ENCODE measurements at regions of chr1 and their contacts with region 1.

Region 1: DNA sequence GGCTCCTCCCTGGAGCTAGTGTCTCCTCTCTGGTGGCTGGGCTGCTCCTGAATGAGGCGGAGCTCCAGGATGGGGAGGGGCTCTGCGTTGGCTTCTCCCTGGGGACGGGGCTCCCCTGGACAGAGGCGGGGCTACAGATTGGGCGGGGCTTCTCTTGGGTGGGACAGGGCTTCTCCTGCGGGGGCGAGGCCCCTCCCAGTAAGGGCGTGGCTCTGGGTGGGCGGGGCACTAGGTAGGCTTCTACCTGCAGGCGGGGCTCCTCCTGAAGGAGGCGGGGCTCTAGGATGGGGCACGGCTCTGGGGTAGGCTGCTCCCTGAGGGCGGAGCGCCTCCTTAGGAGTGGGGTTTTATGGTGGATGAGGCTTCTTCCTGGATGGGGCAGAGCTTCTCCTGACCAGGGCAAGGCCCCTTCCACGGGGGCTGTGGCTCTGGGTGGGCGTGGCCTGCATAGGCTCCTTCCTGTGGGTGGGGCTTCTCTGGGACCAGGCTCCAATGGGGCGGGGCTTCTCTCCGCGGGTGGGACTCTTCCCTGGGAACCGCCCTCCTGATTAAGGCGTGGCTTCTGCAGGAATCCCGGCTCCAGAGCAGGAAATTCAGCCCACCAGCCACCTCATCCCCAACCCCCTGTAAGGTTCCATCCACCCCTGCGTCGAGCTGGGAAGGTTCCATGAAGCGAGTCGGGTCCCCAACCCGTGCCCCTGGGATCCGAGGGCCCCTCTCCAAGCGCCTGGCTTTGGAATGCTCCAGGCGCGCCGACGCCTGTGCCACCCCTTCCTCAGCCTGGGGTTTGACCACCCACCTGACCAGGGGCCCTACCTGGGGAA is 22.7 kb upstream of the ARF1 start:
- DNase-seq: peak; percentile 91
- ATAC-seq: peak; percentile 85
- H3K4me3 Mint-ChIP-seq: peak overlapping the region; percentile 51
- H3K27ac Mint-ChIP-seq: no peak overlapping the region
- H3K4me1 Mint-ChIP-seq: peaks cover 9% of the 10 kb centered on the region
- H3K27me3 Mint-ChIP-seq: peaks cover 30% of the 10 kb centered on the region

Region 2: GRCh38 chr1:228102791-228103620 is 43.2 kb after region 1 on chr1 and contains the start of gene C1orf35:
- CTCF ChIA-PET with region 1: no interaction called
- POLR2A ChIA-PET with region 1: no interaction called
- intact Hi-C with region 1: loop called in 1 of 2 experiments (anchors 1 kb)
- DNase-seq: peak; percentile 97
- ATAC-seq: peak; percentile 90
- H3K4me3 Mint-ChIP-seq: peak within 1 kb of the TSS; percentile 89
- H3K27ac Mint-ChIP-seq: peak within 1 kb of the TSS; percentile 91
- H3K4me1 Mint-ChIP-seq: peaks cover 22% of the 10 kb centered on the region
- H3K27me3 Mint-ChIP-seq: no peaks in the 10 kb centered on the region
- total RNA-seq, gene C1orf35: 14.6 to 22.5 TPM

Region 3: GRCh38 chr1:228174482-228175375 is 114.9 kb after region 1 on chr1:
- CTCF ChIA-PET with region 1: no interaction called
- POLR2A ChIA-PET with region 1: no interaction called
- intact Hi-C with region 1: loop called in 1 of 2 experiments (anchors 2 kb)
- DNase-seq: peak; percentile 59
- ATAC-seq: peak; percentile 67
- H3K4me3 Mint-ChIP-seq: no peak overlapping the region
- H3K27ac Mint-ChIP-seq: no peak overlapping the region
- H3K4me1 Mint-ChIP-seq: no peaks in the 10 kb centered on the region
- H3K27me3 Mint-ChIP-seq: no peaks in the 10 kb centered on the region

Region 4: DNA sequence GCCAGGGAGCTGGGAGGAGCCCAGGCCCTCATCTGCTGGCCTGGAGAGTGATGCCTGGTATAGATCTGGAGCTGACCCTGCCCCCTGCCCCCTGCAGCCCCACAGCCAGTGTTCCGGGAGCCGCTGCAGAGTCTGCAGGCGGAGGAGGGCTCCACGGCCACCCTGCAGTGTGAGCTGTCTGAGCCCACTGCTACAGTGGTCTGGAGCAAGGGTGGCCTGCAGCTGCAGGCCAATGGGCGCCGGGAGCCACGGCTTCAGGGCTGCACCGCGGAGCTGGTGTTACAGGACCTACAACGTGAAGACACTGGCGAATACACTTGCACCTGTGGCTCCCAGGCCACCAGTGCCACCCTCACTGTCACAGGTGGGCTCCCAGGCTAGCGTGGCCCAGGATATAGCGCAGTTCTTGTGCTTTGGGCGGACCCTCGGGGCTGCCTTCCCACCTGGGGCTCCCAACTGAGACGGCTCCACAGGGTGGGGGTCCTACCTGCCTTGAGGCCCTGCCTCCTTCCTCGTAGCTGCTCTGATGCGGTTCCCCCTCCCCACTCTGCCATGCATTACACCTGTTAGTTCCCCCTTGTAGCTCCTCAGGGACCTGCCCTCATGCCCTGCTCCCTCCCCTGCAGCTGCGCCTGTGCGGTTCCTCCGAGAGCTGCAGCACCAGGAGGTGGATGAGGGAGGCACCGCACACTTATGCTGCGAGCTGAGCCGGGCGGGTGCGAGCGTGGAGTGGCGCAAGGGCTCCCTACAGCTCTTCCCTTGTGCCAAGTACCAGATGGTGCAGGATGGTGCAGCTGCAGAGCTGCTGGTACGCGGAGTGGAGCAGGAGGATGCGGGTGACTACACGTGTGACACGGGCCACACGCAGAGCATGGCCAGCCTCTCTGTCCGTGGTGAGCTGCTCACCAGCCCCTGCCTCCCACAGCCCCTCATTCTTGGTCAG is 246.7 kb after region 1 on chr1:
- CTCF ChIA-PET with region 1: no interaction called
- POLR2A ChIA-PET with region 1: no interaction called
- intact Hi-C with region 1: no loop called
- DNase-seq: no peak
- ATAC-seq: no peak
- H3K4me3 Mint-ChIP-seq: no peak overlapping the region
- H3K27ac Mint-ChIP-seq: no peak overlapping the region
- H3K4me1 Mint-ChIP-seq: no peaks in the 10 kb centered on the region
- H3K27me3 Mint-ChIP-seq: no peaks in the 10 kb centered on the region